ENCODE measurements at regions of chr17 and their contacts with region 1.

Region 1: DNA sequence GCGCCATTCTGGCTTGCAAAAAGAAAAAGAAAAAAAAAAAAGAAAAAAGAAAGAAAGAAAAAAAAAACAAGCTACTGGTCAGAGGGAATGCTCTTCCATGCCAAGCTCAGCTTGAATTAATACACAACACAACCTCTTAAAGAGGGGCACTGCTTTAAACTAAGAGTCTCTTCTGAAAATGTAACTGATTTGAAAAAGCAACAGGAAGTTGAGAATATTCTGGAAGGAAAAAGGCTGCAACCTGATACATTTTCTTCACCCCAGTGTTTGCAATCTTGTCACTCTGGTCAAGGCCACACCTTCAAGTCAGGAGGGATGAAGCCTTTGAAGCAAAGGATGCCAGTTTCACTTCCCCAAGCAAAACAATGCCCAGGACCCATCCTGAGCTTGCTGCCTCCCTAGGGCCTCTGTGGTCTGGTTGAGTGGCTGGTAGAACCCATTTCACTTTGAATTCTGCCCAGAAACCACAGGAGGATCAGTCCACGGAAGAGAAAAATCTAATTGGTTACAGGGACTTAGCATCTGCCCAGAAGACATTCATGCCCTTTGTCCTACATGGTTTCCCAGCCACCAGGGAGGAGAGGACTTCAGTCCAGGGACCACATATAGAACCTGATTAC is 389.7 kb downstream of the SOX9 start:
- DNase-seq: no peak
- H3K4me3 ChIP-seq: no peak overlapping the region
- H3K27ac ChIP-seq: no peak overlapping the region
- H3K4me1 ChIP-seq: no peaks in the 10 kb centered on the region
- H3K27me3 ChIP-seq: no peaks in the 10 kb centered on the region
- CTCF ChIP-seq: no peak

Region 2: DNA sequence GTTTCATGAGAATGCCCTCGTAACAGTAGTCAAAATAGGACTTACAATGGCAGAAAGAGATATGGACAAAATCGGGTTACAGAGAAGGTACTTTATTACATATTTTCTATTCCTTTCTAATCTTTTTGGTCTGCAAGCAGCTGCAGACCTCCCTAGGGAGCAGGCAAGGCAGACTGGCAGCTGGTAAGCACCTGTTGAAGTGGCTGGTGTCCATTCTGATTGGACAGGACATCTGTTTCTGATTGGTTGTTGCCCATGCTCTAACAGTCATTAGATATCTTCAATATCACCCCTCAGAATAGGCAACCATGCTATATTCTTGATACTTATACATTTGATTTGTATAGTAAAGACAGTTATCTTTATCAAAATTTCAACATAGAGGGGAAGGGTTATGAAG is 1734.8 kb before region 1 on chr17:
- CTCF ChIA-PET with region 1: no interaction called
- dilution Hi-C with region 1: no loop called
- in situ Hi-C with region 1: loop called in 1 of 2 experiments (anchors 25 kb)
- intact Hi-C with region 1: no loop called
- DNase-seq: no peak
- H3K4me3 ChIP-seq: no peak overlapping the region
- H3K27ac ChIP-seq: no peak overlapping the region
- H3K4me1 ChIP-seq: no peaks in the 10 kb centered on the region
- H3K27me3 ChIP-seq: no peaks in the 10 kb centered on the region
- CTCF ChIP-seq: no peak

Measured in mammary epithelial cell (primary cell).